RWPE1 (cell line): ENCODE measurements at regions of chr4 and their contacts with region 1.

Region 1: DNA sequence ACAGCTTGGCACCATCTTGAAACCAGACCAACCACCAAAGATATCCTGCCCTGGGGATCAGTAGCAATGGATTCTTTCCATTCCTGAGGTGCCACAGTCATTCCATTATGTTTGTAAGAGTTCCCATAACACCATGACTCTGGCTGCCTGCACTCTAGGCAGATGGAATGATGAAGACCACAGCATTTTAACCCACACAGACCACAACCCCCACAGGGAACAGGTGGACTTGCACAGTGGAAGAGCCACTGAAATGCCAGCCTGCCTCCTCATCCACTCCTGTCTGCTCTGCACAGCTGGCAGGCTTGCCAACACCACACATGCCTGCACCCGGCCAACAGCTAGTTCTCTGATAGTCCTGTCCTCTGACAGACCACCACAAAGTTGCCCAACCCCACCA is 2362.2 kb upstream of the AGA start:
- DNase-seq: no peak
- H3K27ac ChIP-seq: no peak overlapping the region
- CTCF ChIP-seq: no peak

Region 2: DNA sequence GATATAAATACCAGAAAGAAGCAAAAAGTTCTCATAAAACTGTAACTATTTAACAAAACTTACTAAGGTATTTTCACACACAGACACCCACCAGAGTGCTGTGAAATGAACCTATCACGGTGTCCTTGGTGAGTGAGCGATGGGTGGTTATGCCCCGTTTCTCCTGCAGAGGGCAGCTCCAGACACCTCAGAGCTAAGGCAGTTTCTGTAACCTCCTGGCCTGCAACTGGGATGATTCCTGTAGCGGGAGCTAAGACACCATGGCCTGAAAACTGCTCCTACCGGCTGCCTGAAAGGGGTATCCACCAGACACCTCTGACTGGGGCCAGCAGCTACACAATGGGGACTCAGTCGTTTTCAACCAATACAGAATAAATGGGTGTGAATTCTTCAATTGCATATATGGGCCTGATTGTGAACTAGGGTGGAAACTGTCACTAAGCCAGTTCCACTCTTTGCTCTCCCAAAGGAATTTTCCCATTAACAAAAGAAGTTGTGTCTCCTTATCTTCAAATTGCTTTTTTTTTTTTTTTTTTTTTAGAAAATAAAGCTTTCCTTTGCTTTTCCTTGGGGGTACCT is 62.9 kb after region 1 on chr4:
- CTCF ChIA-PET with region 1: no interaction called
- POLR2A ChIA-PET with region 1: interaction called, 13 read pairs
- DNase-seq: peak; percentile 7
- H3K27ac ChIP-seq: no peak overlapping the region
- CTCF ChIP-seq: peak; percentile 70

Region 3: GRCh38 chr4:180407275-180407885 is 602.9 kb after region 1 on chr4:
- CTCF ChIA-PET with region 1: no interaction called
- POLR2A ChIA-PET with region 1: no interaction called
- DNase-seq: no peak
- H3K27ac ChIP-seq: no peak overlapping the region
- CTCF ChIP-seq: no peak